GM12878 (cell line): ENCODE measurements at regions of chr15 and their contacts with region 1.

Region 1: GRCh38 chr15:72231066-72231846 is at the start of gene PKM:
- DNase-seq: peak; percentile 84
- ATAC-seq: peak; percentile 57
- H3K4me3 ChIP-seq: peak within 1 kb of the TSS; percentile 96
- H3K27ac ChIP-seq: peak within 1 kb of the TSS; percentile 97
- H3K4me1 ChIP-seq: peaks cover 5% of the 10 kb centered on the region; the same call in 1 of the 2 replicates
- H3K27me3 ChIP-seq: no peaks in the 10 kb centered on the region
- CTCF ChIP-seq: no peak
- EP300 ChIP-seq: peak; percentile 24 to 34; a peak in 1 of 4 replicates
- POLR2A ChIP-seq: peak; percentile 95
- RAD21 ChIP-seq: no peak
- polyA plus RNA-seq, gene PKM: 491 to 500 TPM

Region 2: DNA sequence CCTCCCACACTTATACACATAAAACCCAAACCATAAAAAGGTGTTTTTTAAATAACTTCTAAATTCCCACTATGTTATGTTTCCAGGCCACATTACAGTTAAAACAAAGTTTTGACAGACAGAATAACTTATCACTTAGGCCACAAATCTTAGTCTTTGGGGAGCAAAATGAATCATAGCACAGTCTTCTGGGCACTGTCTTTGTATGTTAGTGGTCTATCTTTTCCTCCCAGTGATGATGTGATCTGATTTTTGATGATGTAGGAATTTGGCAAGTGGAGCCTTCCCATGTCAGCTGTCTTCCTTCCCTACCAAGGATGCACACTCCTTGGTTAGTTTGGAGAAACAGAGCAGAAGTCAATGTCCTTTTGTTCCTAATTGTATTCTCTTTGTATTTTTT is 1048.7 kb before region 1 on chr15:
- CTCF ChIA-PET with region 1: no interaction called
- POLR2A ChIA-PET with region 1: no interaction called
- RAD21 ChIA-PET with region 1: no interaction called
- SMC1A ChIA-PET with region 1: no interaction called
- in situ Hi-C with region 1: no loop called
- intact Hi-C with region 1: no loop called
- DNase-seq: no peak
- ATAC-seq: no peak
- H3K4me3 ChIP-seq: no peak overlapping the region
- H3K27ac ChIP-seq: no peak overlapping the region
- H3K4me1 ChIP-seq: no peaks in the 10 kb centered on the region
- H3K27me3 ChIP-seq: no peaks in the 10 kb centered on the region
- CTCF ChIP-seq: no peak
- EP300 ChIP-seq: no peak
- POLR2A ChIP-seq: no peak
- RAD21 ChIP-seq: no peak

Region 3: DNA sequence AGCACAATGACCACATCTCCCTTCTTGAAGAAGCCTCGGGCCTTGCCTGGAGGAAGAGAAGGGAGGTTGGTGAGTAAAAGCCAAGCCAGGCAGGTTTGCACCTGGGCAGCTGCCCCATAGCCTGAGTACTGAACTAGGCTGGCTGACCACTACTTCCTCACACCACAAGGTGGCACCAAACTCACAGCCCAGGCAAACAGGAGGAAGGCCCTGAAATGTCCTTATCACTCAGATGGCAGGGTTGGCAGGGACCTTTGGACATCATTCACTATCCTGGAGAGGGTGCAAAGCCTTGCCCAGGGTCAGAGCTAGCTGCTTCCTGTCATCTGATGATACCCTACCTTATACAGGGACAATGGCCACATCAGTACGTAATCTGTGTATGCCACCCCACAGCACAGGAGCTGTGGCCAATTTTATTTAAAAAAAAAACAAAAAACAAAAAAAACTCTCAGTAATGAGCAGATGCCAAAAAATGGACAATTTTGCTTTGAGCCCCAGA is 31.5 kb before region 1 on chr15:
- CTCF ChIA-PET with region 1: interaction called, 27 read pairs
- POLR2A ChIA-PET with region 1: interaction called, 5 read pairs
- RAD21 ChIA-PET with region 1: interaction called, 6 read pairs
- SMC1A ChIA-PET with region 1: interaction called, 16 read pairs
- in situ Hi-C with region 1: no loop called
- intact Hi-C with region 1: no loop called
- DNase-seq: peak; percentile 36
- ATAC-seq: peak; percentile 93
- H3K4me3 ChIP-seq: no peak overlapping the region
- H3K27ac ChIP-seq: no peak overlapping the region
- H3K4me1 ChIP-seq: no peaks in the 10 kb centered on the region; the same call in 1 of the 2 replicates
- H3K27me3 ChIP-seq: no peaks in the 10 kb centered on the region
- CTCF ChIP-seq: peak; percentile 90 to 95 (median 94)
- EP300 ChIP-seq: no peak
- POLR2A ChIP-seq: peak; percentile 52; the same call in 1 of the 2 replicates
- RAD21 ChIP-seq: peak; percentile 92

Region 4: DNA sequence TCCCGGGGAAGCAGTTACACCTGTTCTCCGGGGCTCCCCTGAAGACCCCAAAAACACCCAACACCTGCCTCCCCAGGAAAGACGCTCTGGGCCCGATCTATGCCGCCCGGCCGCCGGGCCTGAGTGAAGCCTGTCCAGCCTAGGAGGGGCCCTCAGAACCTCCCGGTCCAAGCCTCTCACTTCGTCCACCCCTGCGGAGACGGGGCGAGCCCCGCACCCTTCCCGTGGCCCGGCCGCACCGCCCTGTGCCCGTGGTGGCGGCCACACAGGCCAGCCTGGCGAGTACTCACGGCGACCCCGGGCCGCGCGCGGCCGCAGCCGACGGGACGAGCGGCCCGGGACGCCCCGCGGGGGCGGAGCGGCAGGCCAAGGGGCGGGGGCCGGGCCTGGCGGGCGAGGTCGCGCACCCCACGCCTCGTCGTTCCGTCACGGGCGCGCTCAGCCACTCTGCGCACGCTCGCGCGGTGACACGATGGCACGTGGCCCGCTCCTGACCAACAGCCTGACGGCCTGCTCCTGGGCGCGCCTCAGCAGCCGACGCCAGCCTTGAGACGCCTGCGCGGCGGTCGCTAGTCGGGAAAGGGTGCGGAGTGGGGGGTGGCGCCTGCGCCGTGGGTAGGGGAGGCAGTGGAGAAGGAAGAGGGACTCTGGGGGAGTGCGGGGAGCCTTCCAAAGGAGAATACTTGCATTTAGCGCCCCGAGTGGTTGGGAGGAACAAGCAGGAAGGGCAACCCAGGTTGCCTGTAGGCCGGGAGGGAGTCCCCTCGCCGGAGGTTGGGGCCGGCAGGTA is 41.2 kb after region 1 on chr15 and contains the start of gene PARP6:
- CTCF ChIA-PET with region 1: interaction called, 11 read pairs
- POLR2A ChIA-PET with region 1: interaction called, 4 read pairs
- RAD21 ChIA-PET with region 1: interaction called, 4 read pairs
- SMC1A ChIA-PET with region 1: interaction called, 15 read pairs
- in situ Hi-C with region 1: no loop called
- intact Hi-C with region 1: loop called (anchors 1 kb)
- DNase-seq: peak; percentile 95
- ATAC-seq: peak; percentile 98
- H3K4me3 ChIP-seq: peak within 1 kb of the TSS; percentile 70
- H3K27ac ChIP-seq: peak within 1 kb of the TSS; percentile 70
- H3K4me1 ChIP-seq: peaks cover 6% of the 10 kb centered on the region; the same call in 1 of the 2 replicates
- H3K27me3 ChIP-seq: no peaks in the 10 kb centered on the region
- CTCF ChIP-seq: peak; percentile 64 to 77 (median 73)
- EP300 ChIP-seq: no peak
- POLR2A ChIP-seq: peak; percentile 83
- RAD21 ChIP-seq: peak; percentile 4; the same call in 1 of the 2 replicates
- polyA plus RNA-seq, gene PARP6: 14.3 to 23.7 TPM

Region 5: GRCh38 chr15:72306211-72306785 is 75.0 kb after region 1 on chr15:
- CTCF ChIA-PET with region 1: no interaction called
- POLR2A ChIA-PET with region 1: interaction called, 4 read pairs
- RAD21 ChIA-PET with region 1: interaction called, 13 read pairs
- SMC1A ChIA-PET with region 1: no interaction called
- in situ Hi-C with region 1: no loop called
- intact Hi-C with region 1: no loop called
- DNase-seq: no peak
- ATAC-seq: peak; percentile 53
- H3K4me3 ChIP-seq: no peak overlapping the region
- H3K27ac ChIP-seq: no peak overlapping the region
- H3K4me1 ChIP-seq: no peaks in the 10 kb centered on the region
- H3K27me3 ChIP-seq: no peaks in the 10 kb centered on the region
- CTCF ChIP-seq: no peak
- EP300 ChIP-seq: no peak
- POLR2A ChIP-seq: no peak
- RAD21 ChIP-seq: no peak

Region 6: GRCh38 chr15:72382146-72382545 is 150.9 kb after region 1 on chr15:
- CTCF ChIA-PET with region 1: no interaction called
- POLR2A ChIA-PET with region 1: no interaction called
- RAD21 ChIA-PET with region 1: no interaction called
- SMC1A ChIA-PET with region 1: no interaction called
- in situ Hi-C with region 1: no loop called
- intact Hi-C with region 1: no loop called
- DNase-seq: no peak
- ATAC-seq: peak; percentile 67
- H3K4me3 ChIP-seq: no peak overlapping the region
- H3K27ac ChIP-seq: no peak overlapping the region
- H3K4me1 ChIP-seq: no peaks in the 10 kb centered on the region
- H3K27me3 ChIP-seq: peaks cover 0 to 2% of the 10 kb centered on the region in 2 experiments; a peak in 2 of 4 replicates
- CTCF ChIP-seq: peak; percentile 18 to 28 (median 24); a peak in 3 of 6 replicates
- EP300 ChIP-seq: no peak
- POLR2A ChIP-seq: no peak
- RAD21 ChIP-seq: 0 out of 2 replicates have a peak, but pooled peaks have one; percentile 15